Mammary epithelial cell (primary cell): ENCODE measurements at regions of chr10 and their contacts with region 1.

Region 1: GRCh38 chr10:9302120-9302746 is 1247.7 kb downstream of the GATA3 start:
- DNase-seq: peak; percentile 47
- H3K4me3 ChIP-seq: no peak overlapping the region
- H3K27ac ChIP-seq: no peak overlapping the region
- H3K4me1 ChIP-seq: no peaks in the 10 kb centered on the region
- H3K27me3 ChIP-seq: no peaks in the 10 kb centered on the region
- CTCF ChIP-seq: peak; percentile 26 to 35

Region 2: GRCh38 chr10:7410862-7411670 is 1891.2 kb before region 1 on chr10 and contains the start of gene SFMBT2:
- CTCF ChIA-PET with region 1: no interaction called
- dilution Hi-C with region 1: no loop called
- in situ Hi-C with region 1: no loop called
- intact Hi-C with region 1: loop called (anchors 10 kb)
- DNase-seq: peak; percentile 64
- H3K4me3 ChIP-seq: peak within 1 kb of the TSS; percentile 53 to 71 (median 60)
- H3K27ac ChIP-seq: no peak within 1 kb of the TSS
- H3K4me1 ChIP-seq: peaks cover 29% of the 10 kb centered on the region
- H3K27me3 ChIP-seq: peaks cover 54% of the 10 kb centered on the region
- CTCF ChIP-seq: peak in 1 of 2 donors; percentile 27
- total RNA-seq, gene SFMBT2: 1.5 to 2.2 TPM

Region 3: DNA sequence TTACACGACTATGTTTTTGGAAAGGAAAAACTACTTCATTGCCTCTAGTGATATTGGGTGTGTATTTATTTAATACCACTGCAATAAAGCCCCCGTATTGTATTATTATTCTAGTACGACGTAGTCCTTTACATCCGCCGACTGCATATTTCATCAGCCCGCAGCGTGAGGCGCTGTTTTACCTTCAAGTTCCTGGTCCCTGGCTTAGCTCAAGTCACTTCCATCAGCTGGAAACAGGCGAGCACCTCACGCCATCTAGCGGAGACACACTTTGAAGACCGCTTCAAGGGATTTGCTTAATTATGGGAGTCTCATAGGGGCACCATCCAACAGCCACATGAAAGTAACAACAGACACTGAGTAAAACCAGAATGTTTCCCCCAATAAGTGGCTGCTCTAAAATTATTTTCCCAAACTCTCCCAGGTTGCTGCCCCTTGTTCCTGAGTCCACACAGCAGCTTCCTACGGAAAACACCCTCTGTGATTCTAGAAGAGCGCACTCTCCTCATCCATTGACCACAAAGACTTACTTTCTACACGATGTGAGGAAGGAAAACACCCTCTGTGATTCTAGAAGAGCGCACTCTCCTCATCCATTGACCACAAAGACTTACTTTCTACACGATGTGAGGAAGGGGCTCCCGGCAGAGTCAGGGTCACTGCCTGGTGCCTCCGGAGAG is 1614.9 kb before region 1 on chr10:
- CTCF ChIA-PET with region 1: no interaction called
- dilution Hi-C with region 1: no loop called
- in situ Hi-C with region 1: no loop called
- intact Hi-C with region 1: loop called (anchors 1 kb)
- DNase-seq: peak; percentile 73
- H3K4me3 ChIP-seq: no peak overlapping the region
- H3K27ac ChIP-seq: no peak overlapping the region
- H3K4me1 ChIP-seq: no peaks in the 10 kb centered on the region
- H3K27me3 ChIP-seq: no peaks in the 10 kb centered on the region
- CTCF ChIP-seq: peak; percentile 83 to 91

Region 4: DNA sequence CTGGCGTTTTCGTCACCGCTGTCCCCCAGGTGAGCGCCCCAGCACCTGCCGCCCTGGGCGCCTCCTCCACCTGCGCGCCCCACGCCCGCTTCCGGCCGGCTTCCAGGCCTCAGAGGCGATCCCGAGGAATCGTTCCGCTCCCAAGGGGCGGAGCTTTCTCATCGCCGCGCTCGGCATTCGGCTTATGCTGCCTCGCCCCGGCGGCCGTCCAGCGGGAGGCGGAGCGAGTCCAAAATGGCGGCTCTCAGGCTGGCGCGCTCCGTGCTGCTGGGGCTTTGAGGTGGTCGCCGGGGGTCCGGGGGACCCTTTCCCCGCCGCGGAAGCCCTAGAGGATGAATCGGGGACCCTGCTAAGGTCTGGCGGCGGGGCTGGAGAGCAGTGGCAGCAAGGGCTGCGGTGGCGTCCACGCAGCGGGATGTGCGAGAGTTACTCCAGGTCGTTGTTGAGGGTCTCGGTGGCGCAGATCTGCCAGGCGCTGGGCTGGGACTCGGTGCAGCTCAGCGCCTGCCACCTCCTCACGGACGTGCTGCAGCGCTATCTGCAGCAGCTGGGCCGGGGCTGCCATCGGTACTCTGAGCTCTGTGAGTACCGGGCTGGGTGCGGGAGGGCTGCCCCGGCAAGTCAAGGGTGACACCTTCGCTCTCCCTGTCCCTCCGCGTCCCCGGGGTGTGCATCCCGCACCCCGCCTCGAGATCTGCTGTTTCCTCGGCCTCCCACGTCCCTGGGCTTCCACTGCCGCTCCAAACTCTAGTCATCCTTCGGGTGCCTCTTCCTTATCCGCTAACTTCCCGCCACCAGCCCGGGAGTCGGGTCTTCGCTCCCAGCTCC is 1483.7 kb before region 1 on chr10 and contains the start of gene TAF3:
- CTCF ChIA-PET with region 1: no interaction called
- dilution Hi-C with region 1: no loop called
- in situ Hi-C with region 1: no loop called
- intact Hi-C with region 1: loop called (anchors 2 kb)
- DNase-seq: peak; percentile 88
- H3K4me3 ChIP-seq: peak within 1 kb of the TSS; percentile 83 to 99 (median 93)
- H3K27ac ChIP-seq: peak within 1 kb of the TSS; percentile 31
- H3K4me1 ChIP-seq: peaks cover 11% of the 10 kb centered on the region
- H3K27me3 ChIP-seq: no peaks in the 10 kb centered on the region
- CTCF ChIP-seq: no peak
- total RNA-seq, gene TAF3: 2.5 to 11.2 TPM

Region 5: GRCh38 chr10:8873310-8873709 is 428.9 kb before region 1 on chr10:
- CTCF ChIA-PET with region 1: no interaction called
- dilution Hi-C with region 1: no loop called
- in situ Hi-C with region 1: no loop called
- intact Hi-C with region 1: loop called (anchors 5 kb)
- DNase-seq: peak; percentile 37
- H3K4me3 ChIP-seq: no peak overlapping the region
- H3K27ac ChIP-seq: no peak overlapping the region
- H3K4me1 ChIP-seq: no peaks in the 10 kb centered on the region
- H3K27me3 ChIP-seq: no peaks in the 10 kb centered on the region
- CTCF ChIP-seq: peak; percentile 37 to 54

Region 6: GRCh38 chr10:9081253-9081652 is 221.0 kb before region 1 on chr10:
- CTCF ChIA-PET with region 1: no interaction called
- dilution Hi-C with region 1: no loop called
- in situ Hi-C with region 1: no loop called
- intact Hi-C with region 1: loop called (anchors 5 kb)
- DNase-seq: peak; percentile 49
- H3K4me3 ChIP-seq: no peak overlapping the region
- H3K27ac ChIP-seq: no peak overlapping the region
- H3K4me1 ChIP-seq: peaks cover 3% of the 10 kb centered on the region
- H3K27me3 ChIP-seq: no peaks in the 10 kb centered on the region
- CTCF ChIP-seq: no peak

Region 7: GRCh38 chr10:9381733-9382532 is 79.7 kb after region 1 on chr10:
- CTCF ChIA-PET with region 1: no interaction called
- dilution Hi-C with region 1: no loop called
- in situ Hi-C with region 1: no loop called
- intact Hi-C with region 1: no loop called
- DNase-seq: no peak
- H3K4me3 ChIP-seq: no peak overlapping the region
- H3K27ac ChIP-seq: no peak overlapping the region
- H3K4me1 ChIP-seq: no peaks in the 10 kb centered on the region
- H3K27me3 ChIP-seq: no peaks in the 10 kb centered on the region
- CTCF ChIP-seq: no peak

Region 8: DNA sequence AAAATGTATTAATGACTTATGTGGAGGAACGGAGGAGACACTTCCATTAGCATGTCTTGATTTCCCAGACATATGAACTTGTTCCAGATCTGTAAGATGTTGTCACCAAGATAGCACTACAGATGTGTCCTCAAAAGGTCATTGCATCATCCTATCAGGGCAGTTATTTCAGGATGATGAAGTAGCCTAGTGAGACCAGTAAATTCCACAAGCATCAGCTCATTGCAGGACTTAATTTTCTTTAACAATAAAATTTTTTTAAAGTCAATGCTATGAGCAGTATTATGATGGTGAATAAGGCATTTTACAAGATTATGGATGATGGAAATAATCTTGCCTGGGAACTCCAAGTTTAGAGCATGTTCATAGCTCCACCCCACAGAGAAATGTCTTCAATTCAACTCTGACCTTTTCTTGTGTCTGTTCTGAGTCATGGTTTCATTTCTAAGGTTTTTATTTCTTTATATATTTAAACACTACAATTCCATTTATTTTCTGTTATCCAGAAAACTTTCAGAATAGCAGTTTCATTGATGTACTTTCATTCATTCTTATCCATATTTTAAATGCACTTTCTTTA is 512.1 kb after region 1 on chr10:
- CTCF ChIA-PET with region 1: no interaction called
- dilution Hi-C with region 1: no loop called
- in situ Hi-C with region 1: no loop called
- intact Hi-C with region 1: no loop called
- DNase-seq: no peak
- H3K4me3 ChIP-seq: no peak overlapping the region
- H3K27ac ChIP-seq: no peak overlapping the region
- H3K4me1 ChIP-seq: no peaks in the 10 kb centered on the region
- H3K27me3 ChIP-seq: no peaks in the 10 kb centered on the region
- CTCF ChIP-seq: no peak